ENCODE measurements at regions of chr6 and their contacts with region 1.

Region 1: DNA sequence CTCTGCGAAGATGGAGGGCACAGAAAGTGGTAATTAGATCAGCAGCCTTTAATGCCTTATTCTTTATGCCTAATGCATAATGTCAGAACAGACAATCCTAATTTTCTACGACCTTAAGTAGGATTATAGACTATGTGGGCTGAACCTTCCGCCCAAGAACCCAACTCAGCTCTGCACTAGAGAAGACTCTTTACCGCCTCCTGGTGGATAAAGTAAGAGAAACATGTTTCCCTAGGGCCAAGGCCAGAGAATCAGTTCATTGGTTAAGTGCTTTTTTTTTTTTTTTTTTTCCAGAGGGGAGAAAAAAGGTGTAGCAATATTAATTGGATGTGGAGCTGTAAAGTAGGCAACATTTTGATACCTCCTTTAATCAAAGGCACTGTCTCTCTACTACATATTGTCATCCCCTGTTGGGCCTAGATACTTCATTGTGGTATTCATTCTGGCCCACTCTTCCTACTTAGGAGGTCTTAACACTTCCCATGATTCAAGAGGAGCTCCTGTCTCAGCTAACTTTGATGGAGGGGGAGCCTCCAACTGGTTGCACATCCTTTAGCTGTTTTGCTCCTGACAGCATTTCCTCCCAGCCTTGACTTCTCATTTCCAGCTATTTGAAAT is 124.9 kb upstream of the NRN1 start:
- DNase-seq: no peak
- H3K4me3 ChIP-seq: no peak overlapping the region
- H3K27ac ChIP-seq: no peak overlapping the region
- H3K27me3 ChIP-seq: no peaks in the 10 kb centered on the region
- CTCF ChIP-seq: no peak

Region 2: DNA sequence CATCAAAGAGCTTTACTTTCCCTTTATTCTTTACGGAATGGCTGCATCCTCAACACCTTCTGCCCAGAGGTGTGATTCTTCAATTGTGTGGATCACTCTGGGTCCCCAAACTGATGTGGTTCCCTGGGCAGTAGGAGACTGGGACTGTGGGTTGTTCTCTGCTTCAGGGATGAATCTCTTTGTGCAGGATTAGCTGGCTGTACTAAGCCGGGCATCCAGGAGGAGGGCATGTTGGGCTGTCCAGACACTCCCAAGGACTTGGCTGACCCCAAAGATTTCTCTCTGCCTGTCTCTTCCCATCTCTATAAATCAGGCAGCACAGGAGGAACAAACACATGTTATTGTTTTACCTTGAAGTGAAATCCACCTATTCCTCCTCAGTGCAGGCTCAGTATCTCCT is 855.0 kb before region 1 on chr6:
- CTCF ChIA-PET with region 1: interaction called, 11 read pairs
- POLR2A ChIA-PET with region 1: no interaction called
- DNase-seq: no peak
- H3K4me3 ChIP-seq: no peak overlapping the region
- H3K27ac ChIP-seq: no peak overlapping the region
- H3K27me3 ChIP-seq: no peaks in the 10 kb centered on the region
- CTCF ChIP-seq: no peak

Region 3: GRCh38 chr6:6981681-6982327 is 850.2 kb after region 1 on chr6:
- CTCF ChIA-PET with region 1: no interaction called
- POLR2A ChIA-PET with region 1: no interaction called
- DNase-seq: no peak
- H3K4me3 ChIP-seq: no peak overlapping the region
- H3K27ac ChIP-seq: no peak overlapping the region
- H3K27me3 ChIP-seq: no peaks in the 10 kb centered on the region
- CTCF ChIP-seq: no peak

Measured in AG04450 (cell line).